Mucosa of descending colon (tissue), 3 donors: ENCODE measurements at regions of chr19 and their contacts with region 1.

Region 1: GRCh38 chr19:39445265-39446111 is at the start of gene SUPT5H:
- DNase-seq: peak; percentile 97 to 99 (median 98)
- ATAC-seq: peak; percentile 99
- H3K4me3 ChIP-seq: peak within 1 kb of the TSS; percentile 72
- H3K4me1 ChIP-seq: peaks cover 12% of the 10 kb centered on the region
- CTCF ChIP-seq: no peak
- total RNA-seq, gene SUPT5H: 101 to 122 (median 102) TPM

Region 2: DNA sequence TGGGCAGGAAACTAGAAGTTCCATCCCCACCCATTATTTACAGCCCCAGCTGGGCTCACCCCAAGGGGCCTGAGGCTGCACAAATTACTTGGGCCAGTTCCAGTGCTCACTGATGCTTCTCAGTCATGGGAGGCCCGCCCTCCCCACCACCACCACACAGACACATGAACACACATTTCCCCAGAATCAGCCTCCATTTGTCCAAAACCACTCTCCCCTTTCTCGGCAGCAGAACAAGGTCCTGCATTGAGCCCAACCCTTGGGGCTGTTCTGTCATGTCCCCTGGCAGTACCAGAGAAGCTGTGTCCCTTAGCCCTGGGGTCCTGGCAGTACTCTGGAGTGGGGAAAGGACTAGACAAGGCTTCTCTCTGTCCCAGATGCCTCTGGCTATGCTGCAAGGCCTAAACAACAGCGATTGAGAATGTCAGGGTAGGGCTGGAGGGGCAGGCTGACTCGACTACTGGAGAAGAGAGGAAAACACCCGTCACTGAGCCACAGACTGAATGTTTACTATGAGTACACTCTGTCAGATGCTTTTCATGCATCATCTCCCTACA is 81.5 kb before region 1 on chr19:
- intact Hi-C with region 1: no loop called
- DNase-seq: no peak
- ATAC-seq: peak; percentile 54
- H3K4me3 ChIP-seq: no peak overlapping the region
- H3K4me1 ChIP-seq: no peaks in the 10 kb centered on the region
- CTCF ChIP-seq: no peak

Region 3: DNA sequence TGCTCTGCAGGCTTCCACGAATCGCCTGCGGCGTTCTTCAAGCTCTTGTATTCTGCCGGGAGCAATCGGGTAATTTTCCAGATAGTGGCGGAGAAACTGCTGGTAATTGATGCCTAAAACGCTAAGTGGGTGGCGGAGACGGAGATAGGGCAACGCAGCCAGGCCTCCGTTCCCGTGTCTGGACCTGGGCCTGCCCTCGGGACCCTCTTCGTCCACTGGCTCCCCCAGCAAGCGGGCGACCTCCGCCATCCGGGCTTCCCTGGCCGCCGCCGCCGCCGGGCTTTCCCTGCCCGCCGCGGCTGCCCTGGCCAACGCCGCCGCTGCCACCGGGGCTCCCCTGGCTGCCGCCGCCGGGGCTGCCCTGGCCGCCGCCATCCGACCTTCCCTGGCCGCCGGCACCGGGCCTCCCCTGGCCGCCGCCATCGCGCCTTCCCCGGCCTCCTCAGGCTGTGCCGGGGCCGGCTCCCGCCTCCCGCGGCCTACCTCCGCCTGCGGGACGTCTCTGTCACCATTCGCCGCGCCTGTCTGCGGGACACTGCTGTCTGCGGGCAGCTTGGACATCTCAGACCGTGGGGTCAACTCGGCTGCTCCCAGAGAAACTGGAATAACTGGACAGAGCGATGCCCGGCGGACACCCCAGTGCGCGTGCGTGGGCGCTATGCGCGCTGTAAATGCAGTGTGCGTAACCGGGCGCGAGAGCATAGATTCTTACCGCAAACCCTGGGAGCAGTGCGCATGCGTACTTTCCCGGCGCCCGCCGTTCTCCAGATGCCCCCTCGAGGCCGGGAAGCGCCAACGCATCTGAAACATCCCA is 94.2 kb after region 1 on chr19 and contains the start of gene EID2:
- intact Hi-C with region 1: loop called in 1 of 2 experiments (anchors 2 kb)
- DNase-seq: peak; percentile 94 to 96 (median 96)
- ATAC-seq: peak; percentile 100
- H3K4me3 ChIP-seq: peak within 1 kb of the TSS; percentile 86
- H3K4me1 ChIP-seq: peaks cover 8% of the 10 kb centered on the region
- CTCF ChIP-seq: peak; percentile 97
- total RNA-seq, gene EID2: 7.0 to 14.7 (median 9.6) TPM